ENCODE measurements at regions of chr9 and their contacts with region 1.

Region 1: GRCh38 chr9:122382901-122383850 is 12.4 kb downstream of the PTGS1 start:
- DNase-seq: peak; percentile 32
- H3K4me3 ChIP-seq: no peak overlapping the region
- H3K27me3 ChIP-seq: no peaks in the 10 kb centered on the region
- CTCF ChIP-seq: no peak

Region 2: GRCh38 chr9:122107291-122107805 is 275.8 kb before region 1 on chr9:
- CTCF ChIA-PET with region 1: no interaction called
- POLR2A ChIA-PET with region 1: interaction called, 16 read pairs
- DNase-seq: no peak
- H3K4me3 ChIP-seq: no peak overlapping the region
- H3K27me3 ChIP-seq: no peaks in the 10 kb centered on the region
- CTCF ChIP-seq: no peak

Region 3: DNA sequence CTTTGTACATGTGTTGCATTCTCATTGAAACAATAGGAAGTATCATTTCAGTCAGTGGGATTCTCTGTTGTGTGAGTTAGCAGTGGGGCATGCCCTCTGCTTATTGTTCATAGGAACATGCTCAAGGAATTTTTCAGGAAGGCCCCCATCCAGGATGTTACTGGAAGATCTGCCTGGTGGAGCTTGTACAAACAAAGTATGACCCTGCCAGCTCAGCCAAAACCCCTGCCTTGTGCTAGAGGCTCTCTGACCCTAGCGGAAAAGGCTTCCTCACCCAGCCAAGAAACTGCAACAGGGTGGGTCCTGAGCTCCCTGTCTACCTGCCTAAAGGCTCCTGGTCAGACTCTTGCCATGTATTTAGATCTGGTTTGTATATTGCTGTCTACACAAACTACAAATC is 75.3 kb before region 1 on chr9:
- CTCF ChIA-PET with region 1: no interaction called
- POLR2A ChIA-PET with region 1: no interaction called
- DNase-seq: no peak
- H3K4me3 ChIP-seq: no peak overlapping the region
- H3K27me3 ChIP-seq: no peaks in the 10 kb centered on the region
- CTCF ChIP-seq: no peak

Region 4: DNA sequence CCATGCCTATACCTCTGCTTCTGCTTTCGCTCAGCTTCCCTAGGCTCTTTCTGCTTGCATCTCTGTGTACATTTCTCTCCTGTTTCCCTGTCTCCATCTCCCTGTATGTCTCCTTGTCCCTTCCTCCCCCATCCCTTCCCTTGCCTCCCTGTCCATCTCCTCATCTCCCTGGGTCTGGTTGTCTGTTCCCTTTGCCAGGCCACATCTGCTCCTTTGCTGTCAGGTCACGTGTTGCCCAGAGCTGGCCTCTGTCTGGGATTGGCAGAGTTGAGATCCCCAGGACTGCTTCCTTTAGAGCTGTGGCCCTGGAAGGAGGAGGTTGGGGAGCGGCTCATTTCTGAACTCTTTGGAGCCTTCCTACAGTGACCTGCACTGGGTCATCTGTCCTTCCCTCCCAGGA is 44.2 kb before region 1 on chr9:
- CTCF ChIA-PET with region 1: no interaction called
- POLR2A ChIA-PET with region 1: no interaction called
- DNase-seq: no peak
- H3K4me3 ChIP-seq: no peak overlapping the region
- H3K27me3 ChIP-seq: no peaks in the 10 kb centered on the region; the same call in 1 of the 2 replicates
- CTCF ChIP-seq: no peak

Region 5: DNA sequence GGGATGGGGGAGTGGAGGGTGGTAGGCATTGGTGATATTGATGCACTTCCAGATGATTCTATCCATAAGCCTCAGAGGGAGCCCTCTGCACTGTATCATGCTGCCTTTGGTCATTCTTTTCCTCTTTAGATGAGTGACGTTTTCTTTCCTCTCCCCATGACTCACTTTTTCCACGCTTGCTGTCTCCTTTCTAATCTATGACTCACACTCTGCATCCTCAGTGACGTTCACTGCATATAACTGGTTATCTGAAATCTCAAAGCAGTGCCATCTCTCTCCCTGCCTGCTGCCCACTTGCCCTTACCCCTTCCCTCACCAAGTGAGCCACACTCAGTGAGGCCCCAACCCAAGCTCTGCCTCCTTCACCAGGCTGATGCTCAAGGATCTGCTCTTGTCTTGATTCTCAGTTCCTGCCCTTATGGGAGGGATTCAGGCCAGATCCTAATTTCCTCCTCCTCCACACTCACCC is 19.3 kb after region 1 on chr9:
- CTCF ChIA-PET with region 1: interaction called, 5 read pairs
- POLR2A ChIA-PET with region 1: interaction called, 13 read pairs
- DNase-seq: peak; percentile 85
- H3K4me3 ChIP-seq: no peak overlapping the region
- H3K27me3 ChIP-seq: no peaks in the 10 kb centered on the region
- CTCF ChIP-seq: no peak

Region 6: DNA sequence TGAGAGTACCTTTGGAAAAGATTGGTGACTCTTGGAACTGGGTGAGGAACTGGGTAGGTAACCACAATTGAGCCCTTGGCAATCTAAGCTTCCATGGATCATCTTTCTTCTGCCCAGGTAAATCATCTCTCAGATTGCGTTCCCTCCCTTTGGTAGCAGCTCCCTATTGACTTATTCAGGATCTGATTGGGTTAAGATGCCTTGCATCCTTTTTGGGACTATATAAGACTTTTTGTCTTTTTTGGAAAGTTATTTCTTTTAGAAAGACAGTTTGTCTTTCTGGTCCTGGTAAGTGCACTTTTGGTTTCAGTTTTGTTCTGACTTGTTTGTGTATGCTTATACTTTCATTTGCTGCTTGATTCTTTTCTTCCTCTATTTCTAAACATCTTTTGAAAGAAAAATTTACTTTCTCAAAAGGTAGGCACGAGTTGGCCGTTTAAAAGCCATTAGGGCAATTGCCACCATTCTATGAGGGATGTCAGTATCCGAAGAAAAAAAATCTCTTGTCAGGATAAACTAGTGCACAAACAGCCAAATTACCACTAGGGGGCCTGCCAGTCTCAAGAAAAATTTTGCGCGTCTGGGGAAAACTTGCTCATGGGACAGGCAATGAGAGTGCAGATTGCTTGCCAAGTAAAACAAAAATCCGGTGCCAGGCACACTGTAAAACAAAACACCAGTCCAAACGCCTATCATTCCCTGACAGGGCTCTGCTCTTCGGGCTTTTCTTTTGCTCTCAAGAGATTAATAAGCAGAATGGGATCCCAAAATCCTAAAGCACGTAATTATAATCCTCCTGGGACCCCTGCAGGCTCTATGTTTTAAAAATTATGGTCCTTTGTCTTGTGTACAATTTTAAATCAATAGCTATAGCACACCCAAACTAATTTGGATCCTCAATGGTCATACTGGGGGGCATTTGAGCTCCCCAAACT is 81.7 kb after region 1 on chr9:
- CTCF ChIA-PET with region 1: interaction called, 3 read pairs
- POLR2A ChIA-PET with region 1: interaction called, 17 read pairs
- DNase-seq: peak; percentile 69
- H3K4me3 ChIP-seq: peak overlapping the region; percentile 33
- H3K27me3 ChIP-seq: no peaks in the 10 kb centered on the region
- CTCF ChIP-seq: peak; percentile 82

Region 7: GRCh38 chr9:122875523-122875922 is 492.3 kb after region 1 on chr9:
- CTCF ChIA-PET with region 1: no interaction called
- POLR2A ChIA-PET with region 1: no interaction called
- DNase-seq: no peak
- H3K4me3 ChIP-seq: no peak overlapping the region
- H3K27me3 ChIP-seq: no peaks in the 10 kb centered on the region
- CTCF ChIP-seq: no peak

Region 8: DNA sequence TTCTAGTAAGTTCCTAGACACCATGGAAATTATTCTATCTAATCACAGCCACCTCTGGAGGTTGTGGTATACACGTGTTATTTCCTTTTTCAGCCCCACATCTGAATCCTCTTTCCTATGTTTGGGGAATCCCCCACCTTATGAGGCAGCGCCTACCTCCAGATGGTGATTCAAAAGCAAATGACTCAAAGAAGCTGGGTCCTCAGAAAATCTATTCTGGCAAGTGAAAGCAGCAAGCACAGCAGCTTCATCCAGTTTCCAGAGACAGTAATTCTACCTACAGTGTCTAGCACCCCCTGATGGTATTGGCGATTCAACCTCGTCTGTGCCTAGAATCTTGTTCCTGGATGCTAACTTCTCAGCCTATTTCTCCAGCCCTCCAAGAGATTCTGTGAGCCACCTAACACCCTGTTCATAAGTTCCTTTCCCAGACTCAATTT is 842.2 kb after region 1 on chr9:
- CTCF ChIA-PET with region 1: no interaction called
- POLR2A ChIA-PET with region 1: no interaction called
- DNase-seq: peak; percentile 13
- H3K4me3 ChIP-seq: no peak overlapping the region
- H3K27me3 ChIP-seq: no peaks in the 10 kb centered on the region
- CTCF ChIP-seq: peak; percentile 63